Calu3 (cell line): ENCODE measurements at regions of chr4 and their contacts with region 1.

Region 1: DNA sequence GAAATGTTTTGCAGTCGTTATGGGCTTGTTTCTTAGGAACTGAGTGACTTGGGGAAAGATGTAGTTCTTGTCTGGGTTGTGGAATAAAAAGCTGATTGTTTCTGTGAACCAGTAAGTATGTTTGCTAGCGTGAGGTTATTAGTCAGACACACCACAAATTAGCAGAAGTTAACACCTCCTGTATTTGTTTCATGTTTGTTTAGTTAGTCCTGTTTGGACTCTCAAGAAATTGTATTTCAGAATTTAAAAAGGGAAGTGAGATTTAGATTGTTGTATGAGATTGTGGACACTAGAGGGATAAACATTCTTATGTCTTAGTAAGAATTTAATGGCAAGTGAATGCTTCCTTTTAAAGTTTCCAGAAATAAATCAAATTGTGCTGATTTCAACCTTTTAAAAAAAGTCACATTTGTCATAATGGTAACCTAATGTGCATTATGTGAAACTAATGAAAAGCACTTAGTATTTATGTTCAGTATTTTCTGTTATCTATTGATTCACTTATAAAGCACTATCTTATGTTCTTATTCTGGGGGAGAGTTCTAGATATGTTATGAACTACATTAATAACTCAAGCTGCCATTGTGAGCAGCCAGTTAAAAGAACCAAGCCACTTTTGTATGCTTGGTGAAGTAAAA is 25.6 kb downstream of the ATP10D start:
- DNase-seq: no peak
- H3K4me3 Mint-ChIP-seq: no peak overlapping the region
- H3K27ac Mint-ChIP-seq: peak overlapping the region; percentile 7
- H3K4me1 Mint-ChIP-seq: peaks cover 18% of the 10 kb centered on the region
- H3K27me3 Mint-ChIP-seq: no peaks in the 10 kb centered on the region
- CTCF ChIP-seq: no peak

Region 2: DNA sequence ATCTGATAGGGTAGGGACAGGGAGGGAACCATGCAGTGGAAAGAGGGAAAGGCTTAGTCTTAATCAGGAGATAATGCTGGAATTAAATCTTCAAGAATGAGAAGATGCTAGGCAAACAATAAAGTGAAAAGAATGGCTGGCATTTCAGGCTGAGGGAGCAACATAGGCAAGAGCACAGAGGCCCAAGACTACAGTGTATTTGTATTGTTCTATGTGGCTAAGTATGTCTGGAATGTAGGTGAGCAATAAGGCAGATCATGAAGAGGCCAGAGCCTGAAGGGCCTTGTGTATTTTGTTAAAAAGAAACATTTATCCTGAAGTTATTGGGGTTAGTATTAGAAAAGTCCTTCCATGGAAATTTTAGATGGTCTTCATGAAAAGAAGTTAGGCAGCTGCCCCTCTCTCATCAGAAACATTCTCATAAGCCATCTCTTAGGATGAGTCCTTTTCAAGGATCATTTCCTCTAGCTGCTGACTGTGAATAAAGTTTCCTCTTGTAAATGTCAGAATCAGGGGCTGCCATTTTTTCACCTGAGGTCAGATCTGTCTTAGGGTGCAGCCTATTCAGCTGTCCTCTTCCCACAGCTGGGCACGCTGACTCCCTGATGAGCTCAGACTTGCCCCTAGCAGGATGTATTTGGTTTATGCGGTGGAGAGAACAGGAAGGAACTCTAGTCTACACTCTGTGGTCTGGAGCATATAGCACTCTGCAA is 20.8 kb after region 1 on chr4:
- CTCF ChIA-PET with region 1: no interaction called
- intact Hi-C with region 1: loop called (anchors 2 kb)
- DNase-seq: no peak
- H3K4me3 Mint-ChIP-seq: no peak overlapping the region
- H3K27ac Mint-ChIP-seq: peak overlapping the region; percentile 28
- H3K4me1 Mint-ChIP-seq: peaks cover 12% of the 10 kb centered on the region
- H3K27me3 Mint-ChIP-seq: no peaks in the 10 kb centered on the region
- CTCF ChIP-seq: no peak

Region 3: DNA sequence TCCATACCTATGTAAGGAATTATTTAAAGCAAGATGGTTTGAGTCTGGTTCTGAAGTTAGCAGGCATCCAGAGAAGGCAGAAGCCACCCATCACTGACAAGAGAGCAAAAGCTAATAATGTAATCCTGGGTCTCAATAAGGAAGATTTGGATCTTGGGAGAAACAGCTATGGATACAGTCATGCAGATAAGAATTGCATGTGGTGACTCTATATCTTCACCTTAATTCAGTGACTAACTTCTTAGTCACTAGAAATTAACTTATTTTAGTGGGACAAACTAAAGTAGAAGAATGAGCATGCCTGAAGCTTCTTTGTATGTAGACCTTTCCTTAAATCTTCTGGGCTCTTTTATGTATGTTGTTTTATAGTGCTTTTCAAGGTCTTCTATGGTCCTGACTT is 41.1 kb after region 1 on chr4:
- CTCF ChIA-PET with region 1: no interaction called
- intact Hi-C with region 1: loop called (anchors 5 kb)
- DNase-seq: no peak
- H3K4me3 Mint-ChIP-seq: no peak overlapping the region
- H3K27ac Mint-ChIP-seq: no peak overlapping the region
- H3K4me1 Mint-ChIP-seq: peaks cover 13% of the 10 kb centered on the region
- H3K27me3 Mint-ChIP-seq: no peaks in the 10 kb centered on the region
- CTCF ChIP-seq: no peak